ENCODE measurements at regions of chr11 and their contacts with region 1.

Region 1: DNA sequence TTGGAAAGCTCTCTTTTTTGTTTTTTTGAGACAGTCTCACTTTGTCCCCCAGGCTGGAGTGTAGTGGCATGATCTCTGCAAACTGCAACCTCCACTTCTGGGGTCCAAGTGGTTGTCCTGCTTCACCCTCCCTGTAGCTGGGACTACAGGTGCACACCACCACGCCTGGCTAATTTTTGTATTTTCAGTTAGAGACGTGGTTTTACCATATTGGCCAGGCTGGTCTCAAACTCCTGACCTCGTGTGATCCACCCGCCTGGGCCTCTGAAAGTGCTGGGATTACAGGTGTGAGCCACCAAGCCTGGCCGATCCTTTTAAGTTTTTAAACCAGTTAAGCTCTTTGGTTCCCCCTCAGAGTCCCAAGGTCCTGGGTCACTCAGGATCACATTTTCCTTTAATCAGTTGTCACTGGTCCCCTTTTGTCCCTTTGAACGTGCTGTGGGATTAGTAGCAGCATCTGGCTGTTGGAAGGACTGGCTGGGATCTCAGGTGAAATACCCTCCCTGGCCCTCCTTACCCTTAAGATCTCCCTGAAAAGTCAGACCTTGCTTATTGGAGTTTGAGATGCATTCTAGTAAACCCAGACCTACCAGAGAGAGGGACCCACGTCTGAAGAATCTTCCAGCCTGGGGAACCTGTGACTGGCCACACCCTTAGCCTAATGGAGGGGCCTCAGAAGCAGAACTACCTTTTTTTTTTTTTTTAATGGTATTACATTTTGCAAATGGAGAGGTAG is 8.1 kb downstream of the MALAT1 start:
- DNase-seq: peak in 7 of 9 donors; percentile 40 to 65 (median 58)
- ATAC-seq: peak; percentile 57
- H3K4me3 ChIP-seq: peak overlapping the region; percentile 99
- H3K4me3 Mint-ChIP-seq: no peak overlapping the region
- H3K27ac ChIP-seq: peak overlapping the region; percentile 99
- H3K27ac Mint-ChIP-seq: peak overlapping the region in 8 of 9 donors; percentile 78 to 92 (median 88)
- H3K4me1 ChIP-seq: peaks cover 35 to 38% of the 10 kb centered on the region in 2 donors
- H3K4me1 Mint-ChIP-seq: peaks cover 46 to 56% (median 49%) of the 10 kb centered on the region in 7 donors
- H3K27me3 ChIP-seq: no peaks in the 10 kb centered on the region
- H3K27me3 Mint-ChIP-seq: peaks cover 0 to 4% (median 0%) of the 10 kb centered on the region in 5 donors

Region 2: GRCh38 chr11:65274735-65275682 is 231.9 kb before region 1 on chr11:
- CTCF ChIA-PET with region 1: interaction called, 3 read pairs
- POLR2A ChIA-PET with region 1: interaction called, 4 read pairs
- intact Hi-C with region 1: loop called in 1 of 2 experiments (anchors 1 kb)
- DNase-seq: peak in 5 of 9 donors; percentile 22 to 31 (median 24)
- ATAC-seq: peak; percentile 78
- H3K4me3 ChIP-seq: no peak overlapping the region
- H3K4me3 Mint-ChIP-seq: no peak overlapping the region
- H3K27ac ChIP-seq: no peak overlapping the region
- H3K27ac Mint-ChIP-seq: no peak overlapping the region
- H3K4me1 ChIP-seq: no peaks in the 10 kb centered on the region
- H3K4me1 Mint-ChIP-seq: peaks cover 0 to 21% (median 4%) of the 10 kb centered on the region in 7 donors
- H3K27me3 ChIP-seq: no peaks in the 10 kb centered on the region
- H3K27me3 Mint-ChIP-seq: no peaks in the 10 kb centered on the region

Region 3: GRCh38 chr11:65418711-65419459 is 88.1 kb before region 1 on chr11:
- CTCF ChIA-PET with region 1: interaction called, 90 read pairs
- POLR2A ChIA-PET with region 1: interaction called, 2,591 read pairs
- intact Hi-C with region 1: loop called (anchors 1 kb)
- DNase-seq: peak; percentile 33 to 89 (median 48)
- ATAC-seq: peak; percentile 51
- H3K4me3 ChIP-seq: peak overlapping the region; percentile 82
- H3K4me3 Mint-ChIP-seq: peak overlapping the region; percentile 92 to 100 (median 97)
- H3K27ac ChIP-seq: peak overlapping the region; percentile 98
- H3K27ac Mint-ChIP-seq: peak overlapping the region; percentile 97 to 100 (median 99)
- H3K4me1 ChIP-seq: peaks cover 36 to 46% of the 10 kb centered on the region in 2 donors
- H3K4me1 Mint-ChIP-seq: peaks cover 36 to 65% (median 45%) of the 10 kb centered on the region in 7 donors
- H3K27me3 ChIP-seq: no peaks in the 10 kb centered on the region
- H3K27me3 Mint-ChIP-seq: peaks cover 0 to 15% (median 0%) of the 10 kb centered on the region in 5 donors

Region 4: GRCh38 chr11:65440831-65441499 is 66.0 kb before region 1 on chr11:
- CTCF ChIA-PET with region 1: interaction called, 3 read pairs
- POLR2A ChIA-PET with region 1: interaction called, 38 read pairs
- intact Hi-C with region 1: no loop called
- DNase-seq: peak in 1 of 9 donors; percentile 12
- ATAC-seq: peak; percentile 45
- H3K4me3 ChIP-seq: no peak overlapping the region
- H3K4me3 Mint-ChIP-seq: peak overlapping the region in 8 of 10 donors; percentile 29 to 71 (median 43)
- H3K27ac ChIP-seq: peak overlapping the region; percentile 3
- H3K27ac Mint-ChIP-seq: peak overlapping the region in 8 of 9 donors; percentile 64 to 90 (median 81)
- H3K4me1 ChIP-seq: peaks cover 0 to 12% of the 10 kb centered on the region in 2 donors
- H3K4me1 Mint-ChIP-seq: peaks cover 17 to 71% (median 53%) of the 10 kb centered on the region in 7 donors
- H3K27me3 ChIP-seq: no peaks in the 10 kb centered on the region
- H3K27me3 Mint-ChIP-seq: no peaks in the 10 kb centered on the region

Region 5: GRCh38 chr11:65477149-65477965 is 29.6 kb before region 1 on chr11:
- CTCF ChIA-PET with region 1: interaction called, 42 read pairs
- POLR2A ChIA-PET with region 1: interaction called, 1,164 read pairs
- intact Hi-C with region 1: loop called in 1 of 2 experiments (anchors 1 kb)
- DNase-seq: peak; percentile 69 to 96 (median 75)
- ATAC-seq: peak; percentile 94
- H3K4me3 ChIP-seq: peak overlapping the region; percentile 97
- H3K4me3 Mint-ChIP-seq: peak overlapping the region; percentile 87 to 100 (median 96)
- H3K27ac ChIP-seq: peak overlapping the region; percentile 96
- H3K27ac Mint-ChIP-seq: peak overlapping the region; percentile 94 to 100 (median 99)
- H3K4me1 ChIP-seq: peaks cover 6 to 17% of the 10 kb centered on the region in 2 donors
- H3K4me1 Mint-ChIP-seq: peaks cover 8 to 30% (median 14%) of the 10 kb centered on the region in 7 donors
- H3K27me3 ChIP-seq: no peaks in the 10 kb centered on the region
- H3K27me3 Mint-ChIP-seq: peaks cover 0 to 2% (median 0%) of the 10 kb centered on the region in 5 donors